Motor neuron (in vitro differentiated cells): ENCODE measurements at regions of chr13 and their contacts with region 1.

Region 1: GRCh38 chr13:39159393-39159792 is 121.1 kb downstream of the NHLRC3 start:
- ATAC-seq: peak in 5 of 8 experiments; percentile 45 to 64 (median 59)
- H3K4me3 ChIP-seq: no peak overlapping the region
- H3K27ac ChIP-seq: no peak overlapping the region
- H3K4me1 ChIP-seq: no peaks in the 10 kb centered on the region

Region 2: GRCh38 chr13:39263033-39263432 is 103.6 kb after region 1 on chr13:
- in situ Hi-C with region 1: loop called in 1 of 9 experiments (anchors 10 kb)
- ATAC-seq: peak in 7 of 8 experiments; percentile 44 to 94 (median 77)
- H3K4me3 ChIP-seq: no peak overlapping the region
- H3K27ac ChIP-seq: no peak overlapping the region
- H3K4me1 ChIP-seq: peaks cover 0 to 5% of the 10 kb centered on the region in 2 donors